Posterior cingulate gyrus (tissue), 11 donors: ENCODE measurements at regions of chr13 and their contacts with region 1.

Region 1: DNA sequence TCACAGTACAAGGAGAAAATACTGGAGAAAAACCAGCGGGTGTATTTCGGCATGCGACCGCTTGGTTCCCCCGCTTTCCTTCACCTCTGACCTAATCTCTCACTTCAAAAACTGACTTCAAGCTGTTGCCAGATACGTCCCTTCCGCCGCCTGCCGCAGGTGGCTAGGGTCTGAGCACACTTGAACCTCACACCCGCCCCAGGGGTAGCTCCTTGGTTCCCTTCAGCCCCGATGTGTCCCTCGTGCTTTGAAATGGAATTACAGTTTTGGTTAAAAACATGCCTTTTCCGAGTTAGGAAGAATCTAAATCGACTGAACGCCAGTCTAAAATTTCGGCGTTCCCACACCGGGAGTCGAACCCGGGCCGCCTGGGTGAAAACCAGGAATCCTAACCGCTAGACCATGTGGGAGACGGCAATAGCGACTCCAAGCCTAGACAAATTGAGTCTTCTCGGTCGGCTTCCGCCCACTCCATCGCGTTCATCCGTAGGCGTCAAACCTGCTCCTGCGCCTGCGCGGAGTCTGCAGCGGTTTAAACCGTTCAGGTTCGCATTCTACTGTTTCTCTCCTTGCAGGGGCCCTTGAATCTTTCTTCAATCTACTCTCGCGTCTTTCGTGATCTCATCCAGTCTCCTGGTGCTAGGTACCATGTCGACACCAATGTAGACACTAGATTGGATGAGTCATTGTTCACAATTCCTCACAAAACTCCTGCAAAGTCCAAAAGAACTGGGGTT is 71.5 kb downstream of the NUFIP1 start:
- DNase-seq: peak; percentile 91 to 99 (median 96)

Region 2: DNA sequence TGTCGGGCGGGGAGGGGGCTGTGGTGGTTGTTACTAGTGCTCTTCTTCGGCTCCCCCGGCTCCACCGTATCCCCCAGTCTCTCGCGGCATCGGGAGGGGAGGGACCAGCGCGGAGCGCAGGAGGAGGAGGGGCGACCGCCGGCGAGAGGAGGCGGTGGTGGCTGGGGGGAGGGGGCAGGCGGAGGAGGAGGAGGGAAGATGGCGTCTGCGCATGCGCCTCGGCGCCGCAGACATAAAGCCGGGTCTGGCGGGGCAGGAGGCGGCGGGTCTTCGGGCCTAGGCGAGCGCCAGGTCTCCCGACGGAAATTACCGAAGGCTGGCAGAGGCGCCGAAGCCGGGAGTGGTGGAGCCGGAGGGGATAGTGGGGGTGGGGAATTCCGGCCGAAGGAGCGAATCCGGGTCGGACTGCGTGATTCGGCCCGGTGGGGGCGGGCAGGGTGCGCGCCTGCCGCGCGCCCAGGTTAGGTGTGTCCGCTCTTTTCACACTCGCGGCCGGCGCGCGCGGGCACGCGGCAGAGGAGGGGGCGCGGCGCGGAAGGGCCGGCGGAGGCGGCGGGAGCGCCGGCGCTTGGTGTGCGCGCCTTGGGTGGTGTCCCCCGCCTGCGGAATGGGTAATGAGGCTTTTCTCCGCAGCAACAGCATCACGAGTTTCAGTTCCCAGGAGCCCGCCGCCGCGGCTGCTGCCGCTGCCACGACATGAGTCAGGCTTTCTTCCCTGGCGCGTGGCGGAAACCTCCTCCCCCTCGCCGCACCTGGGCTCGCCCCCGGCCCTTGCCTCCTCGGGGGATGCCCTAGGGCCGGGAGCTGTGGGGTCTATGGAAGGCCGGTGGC is 340.3 kb before region 1 on chr13:
- intact Hi-C with region 1: loop called (anchors 2 kb)
- DNase-seq: peak; percentile 92 to 99 (median 93)

Region 3: DNA sequence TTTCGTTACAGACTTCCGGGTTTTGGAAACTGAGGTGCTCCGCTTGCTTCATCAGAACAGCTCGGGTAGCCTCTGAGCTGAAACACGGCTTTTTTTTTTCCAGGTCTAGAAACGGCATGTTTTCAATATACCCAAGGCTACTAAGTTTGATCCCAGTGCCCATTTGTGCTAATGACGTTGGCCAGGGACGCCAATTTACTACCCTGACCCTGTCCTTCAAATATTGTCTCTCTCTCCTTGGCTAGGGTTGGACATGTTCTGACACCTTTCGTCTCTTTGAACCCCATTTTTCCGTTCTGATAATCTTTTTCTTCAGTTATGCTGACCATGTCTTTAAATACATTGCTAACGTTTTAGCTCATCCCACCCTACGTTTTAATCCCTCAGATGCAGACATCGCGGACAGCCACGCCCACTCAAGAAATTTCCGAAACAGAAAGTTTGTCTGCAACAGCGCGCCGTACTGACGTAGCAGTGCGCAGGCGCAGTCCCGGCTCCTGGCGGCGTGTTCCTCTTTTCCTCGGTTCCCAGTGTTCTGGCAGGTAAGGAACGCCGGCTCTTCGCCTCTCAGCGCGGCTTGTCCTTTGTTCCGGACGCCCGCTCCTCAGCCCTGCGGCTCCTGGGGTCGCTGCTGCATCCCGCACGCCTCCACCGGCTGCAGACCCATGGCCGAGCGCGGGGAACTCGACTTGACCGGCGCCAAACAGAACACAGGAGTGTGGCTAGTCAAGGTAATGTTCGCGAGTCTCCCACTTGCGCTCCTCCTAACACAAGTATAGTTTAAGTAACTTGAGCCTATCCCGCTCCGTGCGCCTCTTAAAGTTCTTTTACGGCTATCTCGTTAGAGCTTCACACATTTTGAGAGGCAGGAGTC is 202.5 kb after region 1 on chr13 and contains the start of gene GTF2F2:
- intact Hi-C with region 1: loop called (anchors 5 kb)
- DNase-seq: peak; percentile 73 to 97 (median 84)

Region 4: DNA sequence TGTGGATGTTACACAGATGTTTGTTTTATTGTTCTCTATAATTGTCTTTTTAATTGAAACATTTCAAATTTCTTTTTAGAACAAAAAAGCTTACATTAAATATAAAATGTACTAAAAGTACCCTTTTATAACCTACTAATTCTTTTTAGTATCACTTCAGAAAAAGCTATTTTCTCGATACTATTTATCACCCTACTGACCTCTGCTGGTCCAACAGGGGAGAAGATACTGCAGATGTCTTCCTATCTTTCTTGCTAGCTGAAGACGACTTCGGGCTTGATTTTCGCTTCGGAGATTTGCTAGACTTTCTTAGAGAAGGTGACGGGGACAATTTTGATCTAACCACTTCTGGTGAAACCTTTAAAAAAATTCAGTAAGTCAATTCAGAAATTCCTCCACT is 1092.4 kb after region 1 on chr13:
- intact Hi-C with region 1: no loop called
- DNase-seq: no peak